CD14-positive monocyte (primary cell): ENCODE measurements at regions of chr11 and their contacts with region 1.

Region 1: GRCh38 chr11:68038718-68039525 is at the start of gene TCIRG1:
- DNase-seq: peak; percentile 67 to 81 (median 80)
- H3K4me3 ChIP-seq: peak within 1 kb of the TSS; percentile 84 to 96 (median 91)
- H3K4me3 Mint-ChIP-seq: peak within 1 kb of the TSS; percentile 89 to 95
- H3K27ac ChIP-seq: peak within 1 kb of the TSS; percentile 98 to 99
- H3K27ac Mint-ChIP-seq: peak within 1 kb of the TSS; percentile 98 to 100 (median 99)
- H3K4me1 ChIP-seq: peaks cover 51 to 73% of the 10 kb centered on the region in 2 donors
- H3K4me1 Mint-ChIP-seq: peaks cover 38% of the 10 kb centered on the region
- H3K27me3 ChIP-seq: no peaks in the 10 kb centered on the region
- H3K27me3 Mint-ChIP-seq: peaks cover 0 to 3% (median 0%) of the 10 kb centered on the region in 3 donors
- CTCF ChIP-seq: no peak
- polyA plus RNA-seq, gene TCIRG1: 197 to 1,286 (median 225) TPM

Region 2: DNA sequence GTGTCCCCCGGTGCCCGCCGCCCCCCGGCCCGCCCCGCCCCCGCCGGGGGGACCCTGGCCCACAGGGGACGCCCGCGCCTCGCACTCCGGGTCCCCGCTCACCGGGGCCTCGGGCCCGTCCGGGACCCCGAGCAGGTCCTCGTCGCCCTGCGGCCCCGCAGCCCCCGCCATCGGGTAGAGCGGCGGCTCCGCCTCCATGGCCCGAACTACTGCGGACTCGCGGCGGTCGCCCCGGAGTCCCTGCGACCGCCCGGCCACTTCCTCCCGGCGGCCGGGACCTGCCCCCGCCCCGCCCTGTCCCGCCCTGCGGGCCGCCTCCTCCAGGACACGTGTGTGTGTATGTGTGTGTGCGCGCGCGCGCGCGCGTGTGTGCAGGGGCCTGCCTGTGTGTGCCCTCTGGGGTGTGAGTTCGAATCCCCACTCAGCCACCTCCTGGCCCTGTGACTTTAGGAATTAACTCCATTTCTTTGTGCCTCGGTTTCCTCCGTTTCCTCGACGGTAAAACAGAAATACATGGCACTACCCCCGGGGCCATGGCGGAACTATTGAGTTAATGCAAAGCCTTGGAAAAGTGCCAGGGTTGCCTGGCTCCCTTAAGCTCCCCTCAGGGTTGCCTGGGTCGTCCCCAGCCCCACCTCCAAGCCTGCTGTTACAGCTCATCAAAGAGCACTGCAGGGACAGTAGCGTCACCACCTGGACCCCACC is 34.9 kb before region 1 on chr11 and contains the start of gene UNC93B1:
- intact Hi-C with region 1: loop called (anchors 5 kb)
- DNase-seq: peak; percentile 81 to 88 (median 86)
- H3K4me3 ChIP-seq: peak within 1 kb of the TSS; percentile 80 to 97 (median 90)
- H3K4me3 Mint-ChIP-seq: peak within 1 kb of the TSS; percentile 95 to 97
- H3K27ac ChIP-seq: peak within 1 kb of the TSS; percentile 61 to 71
- H3K27ac Mint-ChIP-seq: peak within 1 kb of the TSS; percentile 73 to 93 (median 88)
- H3K4me1 ChIP-seq: peaks cover 51 to 74% of the 10 kb centered on the region in 2 donors
- H3K4me1 Mint-ChIP-seq: peaks cover 55% of the 10 kb centered on the region
- H3K27me3 ChIP-seq: no peaks in the 10 kb centered on the region
- H3K27me3 Mint-ChIP-seq: peaks cover 0 to 1% (median 0%) of the 10 kb centered on the region in 3 donors
- CTCF ChIP-seq: no peak
- polyA plus RNA-seq, gene UNC93B1: 185 to 301 (median 220) TPM

Region 3: DNA sequence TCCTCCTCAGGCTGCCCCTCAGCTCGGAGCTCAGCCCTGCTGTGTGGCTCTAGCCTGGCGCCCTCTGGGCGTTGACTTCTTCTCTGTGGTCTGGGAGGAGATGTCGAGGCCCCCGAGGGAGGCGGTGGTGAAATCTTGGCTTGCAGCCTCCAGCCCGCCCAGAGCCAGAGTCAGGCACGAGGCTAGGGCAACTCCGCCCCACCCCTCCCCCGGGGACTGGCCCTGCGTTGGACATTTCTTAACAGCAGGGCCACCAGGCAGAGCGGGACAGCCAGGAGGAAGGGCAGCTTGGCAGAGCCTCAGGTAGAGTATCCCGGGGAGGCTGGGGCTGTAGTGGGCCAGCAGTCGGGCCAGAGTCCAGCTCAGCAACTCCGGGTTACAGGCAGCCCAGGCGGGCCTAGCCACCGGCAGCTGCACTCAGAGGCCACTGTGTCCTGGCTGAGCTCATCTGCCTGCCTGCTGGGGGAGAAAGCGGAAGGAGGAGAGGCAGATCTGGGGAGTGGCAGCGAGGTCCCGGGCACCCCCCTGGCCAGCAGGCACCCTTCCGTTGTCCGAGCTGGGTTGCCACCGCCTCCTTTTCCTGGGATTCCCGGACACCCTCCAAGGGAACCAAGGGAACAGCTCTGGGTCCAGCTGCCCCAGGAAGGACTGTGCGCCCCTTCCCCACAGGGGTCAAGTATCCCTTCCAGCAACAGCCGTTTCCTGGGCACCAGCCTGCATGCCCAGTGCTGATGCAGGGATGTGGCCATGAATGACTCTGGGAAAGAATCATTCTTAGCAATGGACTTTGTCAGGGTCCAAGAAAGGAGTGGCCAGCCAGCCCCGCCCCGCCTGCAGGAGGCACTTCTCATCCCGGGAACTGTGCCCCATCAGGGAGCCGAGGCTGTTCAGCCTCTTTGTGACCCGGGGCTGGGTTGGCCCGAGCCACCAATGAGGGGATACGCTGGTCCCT is 28.6 kb before region 1 on chr11 and contains the start of gene ALDH3B1:
- intact Hi-C with region 1: loop called (anchors 2 to 5 kb)
- DNase-seq: peak; percentile 83 to 90 (median 87)
- H3K4me3 ChIP-seq: peak within 1 kb of the TSS; percentile 52 to 89 (median 60)
- H3K4me3 Mint-ChIP-seq: peak within 1 kb of the TSS; percentile 83 to 92
- H3K27ac ChIP-seq: peak within 1 kb of the TSS; percentile 90 to 94
- H3K27ac Mint-ChIP-seq: peak within 1 kb of the TSS; percentile 91 to 97 (median 95)
- H3K4me1 ChIP-seq: peaks cover 76 to 85% of the 10 kb centered on the region in 2 donors
- H3K4me1 Mint-ChIP-seq: peaks cover 74% of the 10 kb centered on the region
- H3K27me3 ChIP-seq: no peaks in the 10 kb centered on the region
- H3K27me3 Mint-ChIP-seq: peaks cover 0 to 1% (median 0%) of the 10 kb centered on the region in 3 donors
- CTCF ChIP-seq: no peak
- polyA plus RNA-seq, gene ALDH3B1: 79.8 to 89.1 (median 86.7) TPM

Region 4: DNA sequence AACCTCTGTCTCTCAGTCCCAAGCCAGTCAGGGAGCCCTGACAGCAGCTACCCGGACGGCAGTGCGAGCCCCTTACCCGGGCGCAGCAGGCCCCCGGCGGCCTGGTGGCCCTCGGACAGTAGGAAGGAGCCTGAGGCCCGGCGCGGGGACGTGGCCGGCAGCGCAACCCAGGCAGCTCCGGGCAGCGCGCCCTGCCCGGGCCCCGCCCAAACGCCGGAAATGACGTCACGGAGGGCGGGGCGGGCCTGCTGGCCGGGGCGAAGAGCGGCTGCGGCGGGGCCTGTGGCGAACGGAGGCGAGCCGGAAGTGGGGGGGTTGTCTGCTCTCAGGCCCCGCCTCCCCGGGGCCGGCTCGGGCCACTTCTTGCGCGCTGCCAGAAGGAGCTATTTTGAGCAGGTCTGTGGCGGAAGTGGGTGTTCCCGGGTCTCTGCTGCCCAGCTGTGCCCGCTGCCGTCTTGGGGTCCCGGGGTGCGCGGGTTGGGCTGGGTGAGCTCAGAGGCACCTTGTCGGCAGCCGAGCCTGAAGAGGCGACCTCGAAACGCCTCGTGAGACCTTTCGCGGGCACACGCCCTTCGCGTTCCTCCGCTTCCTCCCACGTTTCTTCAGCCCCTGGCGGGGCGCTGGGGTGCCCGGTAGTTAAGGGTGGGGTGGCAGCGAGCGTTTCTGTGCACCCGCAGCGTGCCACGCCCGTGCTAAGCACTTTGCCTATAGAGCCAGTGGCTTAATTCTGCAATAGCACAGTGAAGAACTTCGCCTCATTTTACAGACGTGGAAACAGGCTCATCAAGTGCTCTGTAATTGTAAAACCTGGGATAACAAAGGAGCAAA is 233.1 kb after region 1 on chr11 and contains the start of gene C11orf24:
- intact Hi-C with region 1: loop called in 1 of 2 experiments (anchors 5 kb)
- DNase-seq: peak; percentile 94 to 96 (median 95)
- H3K4me3 ChIP-seq: peak within 1 kb of the TSS; percentile 71 to 90 (median 77)
- H3K4me3 Mint-ChIP-seq: peak within 1 kb of the TSS; percentile 89 to 95
- H3K27ac ChIP-seq: peak within 1 kb of the TSS; percentile 95 to 96
- H3K27ac Mint-ChIP-seq: peak within 1 kb of the TSS; percentile 95 to 99 (median 98)
- H3K4me1 ChIP-seq: peaks cover 50 to 62% of the 10 kb centered on the region in 2 donors
- H3K4me1 Mint-ChIP-seq: peaks cover 51% of the 10 kb centered on the region
- H3K27me3 ChIP-seq: no peaks in the 10 kb centered on the region
- H3K27me3 Mint-ChIP-seq: peaks cover 0 to 7% (median 0%) of the 10 kb centered on the region in 3 donors
- CTCF ChIP-seq: no peak
- polyA plus RNA-seq, gene C11orf24: 9.5 to 21.8 (median 12.6) TPM